Cardiac septum (tissue), 1 donor: ENCODE measurements at regions of chr1 and their contacts with region 1.

Region 1: GRCh38 chr1:154730259-154730658 is 122.3 kb upstream of the ADAR start:
- DNase-seq: no peak

Region 2: DNA sequence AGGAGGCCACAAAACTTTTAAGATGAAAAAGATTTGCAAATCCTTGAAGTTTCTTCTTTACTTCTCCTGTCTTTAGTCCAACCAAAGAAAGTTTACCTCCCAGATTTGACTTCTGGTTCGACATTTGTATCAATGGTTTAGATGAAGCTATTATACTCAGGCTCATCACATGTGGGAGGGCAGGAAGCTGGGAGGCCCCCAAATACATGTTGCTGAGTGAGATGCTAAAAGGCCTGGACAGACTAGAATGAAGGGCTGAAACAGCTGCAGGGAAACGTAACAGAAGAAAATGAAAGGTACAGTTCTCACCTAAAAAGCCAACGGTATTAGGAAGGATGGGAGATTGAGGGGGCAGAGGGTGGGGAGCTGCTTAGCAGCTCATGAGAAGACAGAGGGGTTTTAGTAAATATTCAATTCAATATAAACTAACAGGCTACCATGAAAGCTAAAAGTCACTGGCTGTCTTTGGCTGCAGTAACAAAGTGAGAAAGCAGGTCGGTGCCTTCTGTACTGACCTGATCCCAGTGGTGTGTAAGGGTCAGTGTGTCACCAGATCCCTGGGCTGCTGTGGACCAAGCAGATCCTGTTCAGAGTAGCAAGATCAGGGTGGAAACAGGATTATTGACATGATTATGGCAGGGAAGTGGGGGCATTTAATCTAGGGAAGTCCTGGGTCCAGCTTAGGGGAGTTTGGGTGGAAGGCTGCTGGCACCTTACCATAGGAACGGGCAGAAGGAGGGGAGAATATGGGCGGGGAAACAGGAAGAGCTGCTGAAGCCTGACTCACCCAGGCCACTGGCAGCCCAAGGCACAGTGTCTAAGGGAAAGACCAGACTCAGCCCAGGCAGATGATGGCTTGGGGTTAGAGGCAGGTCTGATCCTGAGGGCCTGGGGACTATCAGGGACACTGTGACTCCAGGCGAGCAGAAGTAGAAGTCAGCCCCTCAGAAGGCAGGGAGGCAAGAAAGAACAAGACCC is 79.5 kb after region 1 on chr1:
- intact Hi-C with region 1: loop called (anchors 5 kb)
- DNase-seq: no peak